IMR-90 (cell line): ENCODE measurements at regions of chr18 and their contacts with region 1.

Region 1: GRCh38 chr18:23703057-23703986 is 14.1 kb downstream of the LAMA3 start:
- DNase-seq: peak; percentile 79
- ATAC-seq: peak; percentile 97
- H3K4me3 ChIP-seq: no peak overlapping the region
- H3K27ac ChIP-seq: no peak overlapping the region
- H3K4me1 ChIP-seq: no peaks in the 10 kb centered on the region
- H3K27me3 ChIP-seq: peaks cover 22% of the 10 kb centered on the region
- CTCF ChIP-seq: peak; percentile 83
- POLR2A ChIP-seq: 0 out of 2 replicates have a peak, but pooled peaks have one; percentile 28
- RAD21 ChIP-seq: peak; percentile 94

Region 2: GRCh38 chr18:23183411-23184155 is 519.7 kb before region 1 on chr18:
- CTCF ChIA-PET with region 1: no interaction called
- POLR2A ChIA-PET with region 1: no interaction called
- dilution Hi-C with region 1: no loop called
- in situ Hi-C with region 1: no loop called
- intact Hi-C with region 1: no loop called
- DNase-seq: peak; percentile 95
- ATAC-seq: peak; percentile 76
- H3K4me3 ChIP-seq: no peak overlapping the region
- H3K27ac ChIP-seq: peak overlapping the region; percentile 41; the same call in 1 of the 2 replicates
- H3K4me1 ChIP-seq: peaks cover 19% of the 10 kb centered on the region
- H3K27me3 ChIP-seq: no peaks in the 10 kb centered on the region
- CTCF ChIP-seq: no peak
- POLR2A ChIP-seq: no peak
- RAD21 ChIP-seq: no peak; the same call in 1 of the 2 replicates

Region 3: DNA sequence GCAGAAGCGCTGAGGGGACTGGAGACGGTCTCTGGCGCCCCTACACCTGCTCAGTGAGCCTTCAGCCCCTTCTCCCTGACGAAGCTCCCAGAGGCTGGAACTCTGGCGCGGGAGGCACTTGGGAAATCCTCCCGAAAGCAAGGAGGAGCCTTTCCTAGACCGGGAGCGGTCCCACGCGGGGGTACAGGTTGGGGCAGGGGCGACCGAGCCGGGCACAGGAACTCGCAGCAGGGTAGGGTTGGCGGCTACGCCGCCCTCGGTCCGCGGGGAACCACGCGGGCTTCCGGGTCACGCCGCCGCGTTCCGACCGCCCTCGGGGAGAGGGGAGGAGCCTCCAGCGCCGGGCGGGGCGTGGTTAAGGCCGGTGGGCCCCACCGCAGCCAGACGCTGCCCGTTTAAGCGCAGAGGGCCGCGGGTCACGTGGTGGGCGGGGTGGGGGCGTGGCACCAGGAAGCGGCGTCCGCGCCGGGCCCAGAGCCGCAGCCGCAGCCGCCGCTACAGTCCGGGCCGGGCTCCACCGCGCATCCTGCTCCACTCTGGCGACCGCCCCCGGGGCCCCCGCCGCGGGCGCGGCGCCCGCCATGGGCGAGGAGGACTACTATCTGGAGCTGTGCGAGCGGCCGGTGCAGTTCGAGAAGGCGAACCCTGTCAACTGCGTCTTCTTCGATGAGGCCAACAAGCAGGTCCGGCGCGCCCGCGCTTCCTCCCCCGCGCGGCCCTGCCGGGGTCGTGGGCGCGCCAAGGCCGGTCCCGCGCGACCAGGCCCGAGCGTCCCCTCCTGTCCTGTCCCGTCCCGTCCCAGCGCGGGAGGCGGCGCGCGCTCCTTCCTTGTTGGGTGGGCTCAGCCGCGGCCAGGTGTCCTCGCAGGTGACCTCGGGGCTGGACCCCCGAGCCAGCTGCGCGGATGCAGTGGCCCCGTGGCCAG is 200.0 kb before region 1 on chr18 and contains the start of gene RMC1:
- CTCF ChIA-PET with region 1: no interaction called
- POLR2A ChIA-PET with region 1: no interaction called
- dilution Hi-C with region 1: no loop called
- in situ Hi-C with region 1: no loop called
- intact Hi-C with region 1: loop called (anchors 5 kb)
- DNase-seq: peak; percentile 90
- ATAC-seq: peak; percentile 97
- H3K4me3 ChIP-seq: peak within 1 kb of the TSS; percentile 73
- H3K27ac ChIP-seq: peak within 1 kb of the TSS; percentile 74
- H3K4me1 ChIP-seq: peaks cover 12% of the 10 kb centered on the region
- H3K27me3 ChIP-seq: no peaks in the 10 kb centered on the region
- CTCF ChIP-seq: 0 out of 2 replicates have a peak, but pooled peaks have one; percentile 6
- POLR2A ChIP-seq: peak; percentile 84
- RAD21 ChIP-seq: no peak
- total RNA-seq, gene RMC1: 13.9 and 14.2 TPM in 2 replicates

Region 4: GRCh38 chr18:23515911-23516546 is 187.3 kb before region 1 on chr18:
- CTCF ChIA-PET with region 1: interaction called, 5 read pairs
- POLR2A ChIA-PET with region 1: no interaction called
- dilution Hi-C with region 1: no loop called
- in situ Hi-C with region 1: loop called (anchors 5 kb)
- intact Hi-C with region 1: loop called (anchors 1 kb)
- DNase-seq: peak; percentile 76
- ATAC-seq: peak; percentile 98
- H3K4me3 ChIP-seq: no peak overlapping the region
- H3K27ac ChIP-seq: no peak overlapping the region
- H3K4me1 ChIP-seq: no peaks in the 10 kb centered on the region; the same call in 1 of the 2 replicates
- H3K27me3 ChIP-seq: no peaks in the 10 kb centered on the region
- CTCF ChIP-seq: peak; percentile 81
- POLR2A ChIP-seq: no peak
- RAD21 ChIP-seq: peak; percentile 81

Region 5: GRCh38 chr18:23619388-23619881 is 83.9 kb before region 1 on chr18:
- CTCF ChIA-PET with region 1: interaction called, 5 read pairs
- POLR2A ChIA-PET with region 1: no interaction called
- dilution Hi-C with region 1: no loop called
- in situ Hi-C with region 1: no loop called
- intact Hi-C with region 1: loop called (anchors 1 kb)
- DNase-seq: no peak
- ATAC-seq: peak; percentile 80
- H3K4me3 ChIP-seq: peak overlapping the region; percentile 48
- H3K27ac ChIP-seq: no peak overlapping the region; the same call in 1 of the 2 replicates
- H3K4me1 ChIP-seq: peaks cover 6% of the 10 kb centered on the region
- H3K27me3 ChIP-seq: peaks cover 23% of the 10 kb centered on the region
- CTCF ChIP-seq: no peak
- POLR2A ChIP-seq: no peak
- RAD21 ChIP-seq: no peak

Region 6: DNA sequence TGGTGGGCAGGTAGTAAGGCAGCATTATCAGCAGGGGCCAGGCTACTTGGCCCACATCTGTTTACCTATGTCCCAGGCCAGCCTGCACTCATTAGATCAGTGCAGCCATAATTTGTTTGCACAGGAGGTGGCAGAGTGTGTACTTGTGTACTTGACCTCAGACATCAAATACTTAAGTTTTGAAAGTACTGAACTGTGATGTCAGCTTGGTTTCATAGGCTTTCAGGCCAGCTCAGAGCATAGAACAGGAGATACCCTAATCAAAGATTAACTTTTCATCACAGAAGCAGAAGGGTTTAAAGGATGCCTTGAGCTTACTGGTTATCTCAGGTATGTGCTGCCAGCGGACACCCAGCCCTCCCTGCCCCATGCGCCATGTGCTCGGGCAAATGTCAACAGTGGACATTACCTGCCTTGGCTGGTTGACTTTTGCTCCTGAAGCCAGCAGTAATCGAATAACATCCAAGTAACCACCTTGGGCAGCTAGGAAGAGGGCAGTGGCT is 73.8 kb before region 1 on chr18:
- CTCF ChIA-PET with region 1: interaction called, 18 read pairs
- POLR2A ChIA-PET with region 1: no interaction called
- dilution Hi-C with region 1: no loop called
- in situ Hi-C with region 1: loop called (anchors 5 kb)
- intact Hi-C with region 1: no loop called
- DNase-seq: no peak
- ATAC-seq: no peak
- H3K4me3 ChIP-seq: no peak overlapping the region
- H3K27ac ChIP-seq: no peak overlapping the region
- H3K4me1 ChIP-seq: peaks cover 8% of the 10 kb centered on the region
- H3K27me3 ChIP-seq: peaks cover 2% of the 10 kb centered on the region; the same call in 1 of the 2 replicates
- CTCF ChIP-seq: no peak
- POLR2A ChIP-seq: no peak
- RAD21 ChIP-seq: no peak

Region 7: DNA sequence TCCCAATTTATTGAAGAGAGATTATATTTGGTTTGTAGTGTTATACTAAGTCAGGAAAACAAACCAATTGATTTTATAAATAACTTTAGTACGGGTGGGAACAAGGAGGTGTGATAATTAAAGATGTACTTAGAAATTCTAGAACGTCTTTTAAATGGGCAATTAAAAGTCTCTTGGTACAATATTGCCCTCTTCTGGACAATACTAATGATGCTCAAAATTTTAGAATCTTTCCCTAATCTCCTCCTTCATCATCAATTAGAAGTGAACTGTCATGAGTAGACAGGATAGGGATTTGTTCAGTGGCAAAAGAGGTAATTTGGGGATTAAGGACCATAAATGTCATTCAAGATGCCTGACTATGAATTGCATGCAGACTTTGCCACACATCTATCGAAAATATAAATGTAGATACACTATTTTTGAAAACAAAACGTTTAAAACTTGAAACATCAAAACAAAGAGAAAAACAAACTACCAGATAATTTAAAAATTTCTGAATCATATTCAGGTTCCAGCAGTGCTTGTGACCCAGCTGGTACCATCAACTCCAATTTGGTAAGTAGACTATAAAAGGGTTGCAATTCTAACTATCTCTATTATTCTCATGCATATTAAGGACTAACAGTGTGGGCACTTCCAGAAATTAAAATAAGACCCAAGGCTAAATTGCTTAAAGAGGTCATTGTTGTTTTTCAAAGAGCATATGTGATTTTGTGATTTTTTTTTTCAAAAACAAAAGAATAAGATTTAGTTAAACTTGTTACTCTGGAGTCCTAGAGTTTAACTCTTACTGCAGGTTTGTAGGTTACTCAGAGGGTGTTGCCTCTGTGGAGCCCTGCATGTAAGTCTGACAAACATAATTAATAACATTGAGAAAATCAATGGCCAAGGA is 109.5 kb after region 1 on chr18:
- CTCF ChIA-PET with region 1: no interaction called
- POLR2A ChIA-PET with region 1: no interaction called
- dilution Hi-C with region 1: no loop called
- in situ Hi-C with region 1: no loop called
- intact Hi-C with region 1: loop called (anchors 1 kb)
- DNase-seq: peak; percentile 19
- ATAC-seq: peak; percentile 61; the same call in 1 of the 2 replicates
- H3K4me3 ChIP-seq: no peak overlapping the region
- H3K27ac ChIP-seq: no peak overlapping the region
- H3K4me1 ChIP-seq: no peaks in the 10 kb centered on the region
- H3K27me3 ChIP-seq: peaks cover 30% of the 10 kb centered on the region
- CTCF ChIP-seq: peak; percentile 66
- POLR2A ChIP-seq: no peak
- RAD21 ChIP-seq: peak; percentile 67

Region 8: DNA sequence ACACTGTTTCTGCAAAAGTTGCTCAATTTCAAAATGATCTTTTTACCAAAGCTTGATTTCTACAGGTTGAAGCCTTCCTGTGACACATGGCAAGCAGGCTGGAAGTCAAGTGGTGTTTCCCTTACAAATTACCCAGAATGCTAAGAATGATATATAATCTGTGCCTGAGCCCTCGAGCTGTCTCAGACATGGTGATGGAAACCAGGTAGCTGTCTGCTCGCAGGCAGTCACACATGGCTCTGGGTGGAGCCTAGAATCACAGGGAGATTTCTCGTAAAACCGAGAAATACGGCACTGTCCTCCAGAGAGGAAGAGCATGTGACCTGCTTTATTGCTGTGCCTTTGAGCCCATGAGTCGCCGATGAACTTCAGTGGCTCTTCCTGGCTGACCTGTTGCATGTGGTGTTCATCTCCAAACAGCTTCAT is 1255.7 kb after region 1 on chr18:
- CTCF ChIA-PET with region 1: no interaction called
- POLR2A ChIA-PET with region 1: no interaction called
- dilution Hi-C with region 1: no loop called
- in situ Hi-C with region 1: no loop called
- intact Hi-C with region 1: no loop called
- DNase-seq: no peak
- ATAC-seq: no peak
- H3K4me3 ChIP-seq: no peak overlapping the region
- H3K27ac ChIP-seq: no peak overlapping the region
- H3K4me1 ChIP-seq: peaks cover 1% of the 10 kb centered on the region; the same call in 1 of the 2 replicates
- H3K27me3 ChIP-seq: peaks cover 15% of the 10 kb centered on the region
- CTCF ChIP-seq: no peak
- POLR2A ChIP-seq: no peak
- RAD21 ChIP-seq: no peak